Caco-2 (cell line): ENCODE measurements at regions of chr10 and their contacts with region 1.

Region 1: DNA sequence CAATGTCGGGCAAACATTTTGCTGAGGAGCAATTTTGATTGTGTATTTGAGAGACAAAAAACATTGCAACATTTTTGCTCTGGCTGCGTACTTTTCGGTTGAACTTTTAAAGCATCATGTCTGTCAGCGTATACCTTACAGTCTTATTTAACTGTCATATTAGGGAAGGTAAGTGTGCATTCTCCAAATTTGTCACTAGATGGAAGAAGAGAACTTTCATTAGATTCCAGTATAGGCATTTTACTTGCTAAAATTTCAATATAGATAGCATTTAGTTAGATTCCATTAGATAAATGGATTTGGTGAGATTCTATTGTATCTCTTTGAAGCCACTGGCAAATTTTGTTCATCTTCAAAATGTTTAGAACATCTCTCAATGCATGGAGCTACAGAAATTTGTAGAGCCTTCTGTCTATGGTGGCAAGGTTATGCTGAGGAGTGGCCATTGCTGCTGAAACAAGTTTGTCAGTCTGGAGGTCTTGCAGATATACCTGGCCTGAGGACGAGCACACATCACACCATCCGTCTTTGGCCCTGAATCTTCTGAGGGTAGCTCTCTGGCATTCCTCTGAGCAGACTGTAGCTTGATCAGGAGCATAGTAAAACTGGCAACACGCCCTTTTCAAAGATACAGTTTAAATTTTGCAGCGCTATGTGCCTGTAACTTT is 437.5 kb upstream of the MBL2 start:
- DNase-seq: peak in 1 of 2 experiments; percentile 45
- H3K4me3 ChIP-seq: no peak overlapping the region
- H3K4me3 Mint-ChIP-seq: no peak overlapping the region
- H3K27ac Mint-ChIP-seq: no peak overlapping the region
- H3K4me1 ChIP-seq: 0 out of 2 replicates have a peak, but pooled peaks cover 3% of the 10 kb centered on the region
- H3K4me1 Mint-ChIP-seq: no peaks in the 10 kb centered on the region
- H3K27me3 ChIP-seq: no peaks in the 10 kb centered on the region
- H3K27me3 Mint-ChIP-seq: peaks cover 2% of the 10 kb centered on the region
- CTCF ChIP-seq: peak; percentile 77

Region 2: GRCh38 chr10:53298443-53298842 is 88.4 kb after region 1 on chr10:
- CTCF ChIA-PET with region 1: no interaction called
- POLR2A ChIA-PET with region 1: no interaction called
- intact Hi-C with region 1: loop called (anchors 5 kb)
- DNase-seq: no peak
- H3K4me3 ChIP-seq: no peak overlapping the region
- H3K4me3 Mint-ChIP-seq: no peak overlapping the region
- H3K27ac Mint-ChIP-seq: no peak overlapping the region
- H3K4me1 ChIP-seq: no peaks in the 10 kb centered on the region
- H3K4me1 Mint-ChIP-seq: no peaks in the 10 kb centered on the region
- H3K27me3 ChIP-seq: no peaks in the 10 kb centered on the region
- H3K27me3 Mint-ChIP-seq: no peaks in the 10 kb centered on the region
- CTCF ChIP-seq: no peak

Region 3: GRCh38 chr10:53808677-53809372 is 598.7 kb after region 1 on chr10:
- CTCF ChIA-PET with region 1: no interaction called
- POLR2A ChIA-PET with region 1: no interaction called
- intact Hi-C with region 1: loop called (anchors 1 kb)
- DNase-seq: peak; percentile 47 to 59
- H3K4me3 ChIP-seq: no peak overlapping the region
- H3K4me3 Mint-ChIP-seq: no peak overlapping the region
- H3K27ac Mint-ChIP-seq: no peak overlapping the region
- H3K4me1 ChIP-seq: no peaks in the 10 kb centered on the region
- H3K4me1 Mint-ChIP-seq: peaks cover 7% of the 10 kb centered on the region
- H3K27me3 ChIP-seq: no peaks in the 10 kb centered on the region; the same call in 1 of the 2 replicates
- H3K27me3 Mint-ChIP-seq: peaks cover 7% of the 10 kb centered on the region
- CTCF ChIP-seq: peak in 1 of 2 experiments; percentile 58

Region 4: DNA sequence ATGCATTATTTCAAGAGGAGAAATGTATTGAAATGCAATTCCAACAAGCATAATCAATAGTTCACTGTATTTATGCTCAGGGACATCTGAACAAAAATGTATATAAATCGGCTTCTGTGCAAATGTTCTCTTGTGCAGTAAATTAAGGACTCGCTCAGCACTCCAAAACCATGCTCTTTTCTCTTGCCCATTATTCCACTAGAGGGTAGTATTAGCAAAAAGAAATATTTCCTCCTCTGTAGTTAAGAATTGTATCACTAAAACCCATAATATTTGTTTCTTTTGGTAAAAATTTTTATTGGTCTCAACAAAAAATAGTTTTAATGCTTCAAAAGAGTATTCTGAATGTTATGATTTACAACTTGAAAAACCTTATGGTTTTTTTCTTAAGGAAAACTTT is 787.9 kb after region 1 on chr10:
- CTCF ChIA-PET with region 1: no interaction called
- POLR2A ChIA-PET with region 1: no interaction called
- intact Hi-C with region 1: loop called (anchors 1 kb)
- DNase-seq: no peak
- H3K4me3 ChIP-seq: no peak overlapping the region
- H3K4me3 Mint-ChIP-seq: no peak overlapping the region
- H3K27ac Mint-ChIP-seq: no peak overlapping the region
- H3K4me1 ChIP-seq: no peaks in the 10 kb centered on the region
- H3K4me1 Mint-ChIP-seq: no peaks in the 10 kb centered on the region
- H3K27me3 ChIP-seq: no peaks in the 10 kb centered on the region
- H3K27me3 Mint-ChIP-seq: no peaks in the 10 kb centered on the region
- CTCF ChIP-seq: peak; percentile 59 to 69